Motor neuron (in vitro differentiated cells): ENCODE measurements at regions of chr2 and their contacts with region 1.

Region 1: GRCh38 chr2:152635635-152636298 is 81.5 kb downstream of the PRPF40A start:
- ATAC-seq: peak; percentile 31 to 70 (median 49)
- H3K4me3 ChIP-seq: no peak overlapping the region
- H3K27ac ChIP-seq: no peak overlapping the region
- H3K4me1 ChIP-seq: no peaks in the 10 kb centered on the region

Region 2: DNA sequence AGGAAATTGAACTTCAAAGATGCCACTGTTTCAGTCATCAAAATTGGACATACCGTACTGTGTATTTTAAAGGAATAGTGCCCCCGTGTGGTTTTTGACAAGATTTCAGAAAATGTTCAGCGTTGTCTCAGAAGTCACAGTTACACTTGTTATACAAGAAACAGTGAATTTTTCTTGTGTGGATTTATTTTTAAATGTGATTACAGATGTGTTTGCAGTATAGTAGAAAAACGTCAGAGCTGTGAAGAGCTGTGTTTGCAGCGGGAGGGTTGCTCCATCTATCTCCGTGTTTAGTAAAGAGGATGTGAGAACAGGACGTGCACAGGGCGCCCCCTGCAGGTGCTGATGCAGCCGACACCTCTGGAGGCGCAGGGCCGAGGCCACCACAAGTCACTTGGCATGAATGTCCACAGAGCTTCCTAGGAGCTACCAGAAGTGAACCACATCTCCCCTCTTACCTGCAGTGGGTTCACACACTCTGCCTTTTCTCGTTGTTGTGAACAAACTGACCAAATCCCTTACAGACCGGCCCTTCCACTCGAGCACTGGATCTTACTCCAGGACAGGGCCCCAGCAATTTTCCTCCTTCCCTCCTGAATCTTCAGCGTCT is 610.0 kb before region 1 on chr2:
- in situ Hi-C with region 1: loop called in 2 of 9 experiments (anchors 25 kb)
- ATAC-seq: peak; percentile 83 to 99 (median 99)
- H3K4me3 ChIP-seq: peak overlapping the region; percentile 24 to 41 (median 36)
- H3K27ac ChIP-seq: no peak overlapping the region
- H3K4me1 ChIP-seq: no peaks in the 10 kb centered on the region

Region 3: GRCh38 chr2:152062125-152063091 is 573.4 kb before region 1 on chr2:
- in situ Hi-C with region 1: loop called in 1 of 9 experiments (anchors 25 kb)
- ATAC-seq: peak in 3 of 8 experiments; percentile 95 to 96 (median 95)
- H3K4me3 ChIP-seq: no peak overlapping the region
- H3K27ac ChIP-seq: no peak overlapping the region
- H3K4me1 ChIP-seq: no peaks in the 10 kb centered on the region

Region 4: DNA sequence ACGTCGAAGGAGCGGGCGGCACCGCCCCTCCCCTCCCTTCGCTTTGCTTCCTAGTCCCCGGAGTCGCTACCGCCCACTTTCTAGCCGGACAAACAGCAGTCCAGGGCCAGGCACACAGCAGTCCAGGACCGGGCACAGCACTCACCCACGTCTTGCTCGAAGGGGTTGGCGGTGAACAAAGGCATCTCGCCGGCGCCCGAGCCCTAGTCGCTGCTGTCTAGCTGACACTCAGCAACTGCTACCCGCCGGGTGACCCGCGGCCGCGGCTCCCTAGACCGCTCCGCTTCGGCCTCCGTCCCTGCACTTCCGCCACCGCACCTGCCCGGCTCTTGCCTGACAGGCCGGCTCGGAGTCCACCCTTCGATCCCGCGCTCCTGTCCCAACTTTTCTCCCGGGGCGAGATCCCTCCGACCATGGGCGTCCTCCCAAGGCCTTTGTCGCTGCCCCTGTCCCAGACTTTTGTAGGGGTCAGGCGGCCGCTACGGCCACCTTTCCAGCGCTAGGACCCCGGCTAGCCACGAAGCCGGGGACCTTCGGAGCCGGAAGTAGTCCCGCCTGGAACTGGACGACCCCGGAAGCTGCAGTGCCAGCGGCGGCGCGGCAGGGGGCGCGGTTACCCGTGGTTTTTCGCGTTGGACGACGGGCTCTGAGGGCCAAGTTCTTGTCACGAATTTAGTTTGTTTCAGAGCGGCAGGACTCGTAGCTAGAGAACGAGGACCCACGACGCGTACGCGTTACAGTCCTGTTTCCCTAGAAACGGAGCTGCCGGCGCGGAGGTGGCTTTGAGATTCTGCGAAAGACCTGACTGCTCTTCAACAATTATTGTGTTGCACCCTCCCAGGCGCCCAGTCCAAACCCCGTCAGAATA is 460.1 kb before region 1 on chr2 and contains the start of gene STAM2:
- in situ Hi-C with region 1: loop called in 7 of 9 experiments (anchors 10 to 25 kb)
- ATAC-seq: peak; percentile 81 to 91 (median 86)
- H3K4me3 ChIP-seq: peak within 1 kb of the TSS; percentile 63 to 79 (median 67)
- H3K27ac ChIP-seq: peak within 1 kb of the TSS; percentile 99 to 100
- H3K4me1 ChIP-seq: peaks cover 3 to 13% of the 10 kb centered on the region in 2 donors
- total RNA-seq, gene STAM2: 14.3 to 43.9 (median 22.2) TPM

Region 5: GRCh38 chr2:152189622-152190495 is 445.9 kb before region 1 on chr2:
- in situ Hi-C with region 1: loop called in 7 of 9 experiments (anchors 10 to 25 kb)
- ATAC-seq: peak in 7 of 8 experiments; percentile 41 to 96 (median 62)
- H3K4me3 ChIP-seq: no peak overlapping the region
- H3K27ac ChIP-seq: no peak overlapping the region
- H3K4me1 ChIP-seq: no peaks in the 10 kb centered on the region

Region 6: GRCh38 chr2:152925547-152926327 is 290.0 kb after region 1 on chr2:
- in situ Hi-C with region 1: no loop called
- ATAC-seq: peak; percentile 96 to 99 (median 98)
- H3K4me3 ChIP-seq: no peak overlapping the region
- H3K27ac ChIP-seq: no peak overlapping the region
- H3K4me1 ChIP-seq: no peaks in the 10 kb centered on the region